ENCODE measurements at regions of chr7 and their contacts with region 1.

Region 1: GRCh38 chr7:50467817-50468610 is 17.9 kb upstream of the FIGNL1 start:
- DNase-seq: peak; percentile 75
- H3K4me3 ChIP-seq: no peak overlapping the region
- H3K27ac ChIP-seq: no peak overlapping the region
- H3K4me1 ChIP-seq: no peaks in the 10 kb centered on the region
- H3K27me3 ChIP-seq: no peaks in the 10 kb centered on the region
- CTCF ChIP-seq: peak; percentile 74 to 93 (median 88)
- POLR2A ChIP-seq: no peak

Region 2: GRCh38 chr7:50293509-50294179 is 174.4 kb before region 1 on chr7:
- intact Hi-C with region 1: no loop called
- DNase-seq: no peak
- H3K4me3 ChIP-seq: no peak overlapping the region
- H3K27ac ChIP-seq: no peak overlapping the region
- H3K4me1 ChIP-seq: no peaks in the 10 kb centered on the region
- H3K27me3 ChIP-seq: no peaks in the 10 kb centered on the region
- CTCF ChIP-seq: no peak
- POLR2A ChIP-seq: no peak

Region 3: DNA sequence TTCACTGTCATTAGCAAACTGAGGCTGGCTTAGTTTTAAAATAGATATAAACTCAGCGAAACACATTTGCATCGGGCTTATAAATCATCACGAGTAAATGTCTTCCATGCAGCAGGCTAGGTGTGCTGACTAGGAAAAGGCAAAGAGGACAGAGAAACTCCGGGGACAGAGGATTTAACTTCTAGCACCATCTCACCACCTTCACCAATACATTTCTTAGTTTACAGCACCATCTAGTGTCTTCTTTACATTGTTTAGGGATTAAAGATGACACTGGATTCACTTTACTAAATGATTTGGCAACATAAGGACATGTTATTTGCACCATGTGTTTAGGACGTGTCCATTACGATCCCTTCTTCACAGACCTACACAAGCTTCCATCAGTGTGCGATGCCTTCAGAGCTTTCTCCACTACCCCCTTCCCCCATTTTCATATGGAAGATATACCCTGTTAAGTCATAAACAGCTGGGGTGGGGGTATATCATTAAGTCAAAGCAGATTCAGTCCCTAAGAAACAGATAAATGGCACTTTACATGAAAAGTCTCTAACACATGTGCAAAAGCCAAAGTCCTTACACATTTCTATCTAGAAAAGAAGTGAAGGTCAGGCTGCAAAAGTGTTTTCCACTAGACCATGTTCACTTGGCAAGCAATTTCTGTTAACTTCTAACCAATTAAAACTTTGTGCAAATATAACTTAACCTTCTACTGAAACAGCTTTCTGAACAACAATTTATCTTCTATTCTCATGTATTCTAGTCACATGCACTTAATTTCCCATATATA is 211.4 kb after region 1 on chr7:
- intact Hi-C with region 1: loop called (anchors 2 kb)
- DNase-seq: no peak
- H3K4me3 ChIP-seq: no peak overlapping the region
- H3K27ac ChIP-seq: no peak overlapping the region
- H3K4me1 ChIP-seq: peaks cover 21% of the 10 kb centered on the region
- H3K27me3 ChIP-seq: no peaks in the 10 kb centered on the region
- CTCF ChIP-seq: peak in 3 of 4 experiments; percentile 47 to 66 (median 51)
- POLR2A ChIP-seq: no peak

Region 4: GRCh38 chr7:50793115-50793946 is 325.3 kb after region 1 on chr7:
- intact Hi-C with region 1: loop called (anchors 5 kb)
- DNase-seq: peak; percentile 65
- H3K4me3 ChIP-seq: peak overlapping the region; percentile 60 to 67
- H3K27ac ChIP-seq: peak overlapping the region; percentile 81 to 83
- H3K4me1 ChIP-seq: no peaks in the 10 kb centered on the region
- H3K27me3 ChIP-seq: no peaks in the 10 kb centered on the region
- CTCF ChIP-seq: no peak
- POLR2A ChIP-seq: no peak

Region 5: GRCh38 chr7:51067757-51068156 is 599.7 kb after region 1 on chr7:
- intact Hi-C with region 1: loop called (anchors 5 kb)
- DNase-seq: peak; percentile 53
- H3K4me3 ChIP-seq: no peak overlapping the region
- H3K27ac ChIP-seq: no peak overlapping the region
- H3K4me1 ChIP-seq: peaks cover 6% of the 10 kb centered on the region
- H3K27me3 ChIP-seq: no peaks in the 10 kb centered on the region
- CTCF ChIP-seq: peak; percentile 25 to 68 (median 65)
- POLR2A ChIP-seq: no peak

Region 6: GRCh38 chr7:51141451-51142003 is 673.5 kb after region 1 on chr7:
- intact Hi-C with region 1: loop called (anchors 2 kb)
- DNase-seq: no peak
- H3K4me3 ChIP-seq: no peak overlapping the region
- H3K27ac ChIP-seq: no peak overlapping the region
- H3K4me1 ChIP-seq: peaks cover 2% of the 10 kb centered on the region
- H3K27me3 ChIP-seq: no peaks in the 10 kb centered on the region
- CTCF ChIP-seq: peak in 3 of 4 experiments; percentile 31 to 50 (median 42)
- POLR2A ChIP-seq: no peak

Region 7: DNA sequence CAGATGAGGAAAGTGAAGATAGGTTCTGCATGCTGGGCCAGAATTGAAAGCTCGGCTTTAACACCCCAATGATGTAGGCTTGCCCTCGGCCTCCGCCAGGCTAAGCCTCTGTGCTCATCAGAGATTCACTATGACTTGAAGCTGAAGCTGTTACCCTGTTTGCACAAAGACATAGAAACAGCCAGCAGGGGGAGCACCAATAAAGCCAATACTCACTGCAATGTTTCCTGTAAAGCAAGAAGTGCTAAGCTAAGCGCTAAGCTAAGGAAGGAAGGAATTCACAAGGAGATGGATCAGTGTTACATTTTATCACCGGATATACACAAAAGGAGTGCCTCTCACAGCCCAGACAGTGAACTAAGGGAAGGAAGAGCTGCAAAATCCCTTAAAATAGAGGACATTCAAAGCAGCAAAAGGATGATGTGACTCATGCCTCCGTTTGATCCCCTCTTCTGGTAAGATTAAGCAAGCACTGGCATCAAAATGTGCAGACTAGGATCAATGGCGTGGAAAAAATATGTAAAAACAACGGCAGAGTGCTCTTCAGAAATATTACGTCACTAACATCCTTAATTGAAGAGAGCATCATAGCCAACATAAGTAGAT is 694.8 kb after region 1 on chr7:
- intact Hi-C with region 1: loop called (anchors 5 kb)
- DNase-seq: peak; percentile 93
- H3K4me3 ChIP-seq: no peak overlapping the region
- H3K27ac ChIP-seq: peak overlapping the region; percentile 40 to 51
- H3K4me1 ChIP-seq: no peaks in the 10 kb centered on the region
- H3K27me3 ChIP-seq: no peaks in the 10 kb centered on the region
- CTCF ChIP-seq: peak; percentile 70 to 92 (median 88)
- POLR2A ChIP-seq: no peak